Activated CD4-positive, alpha-beta T cell treated with anti-CD3 and anti-CD28 coated beads for 36 hours (primary cell): ENCODE measurements at regions of chr17 and their contacts with region 1.

Region 1: DNA sequence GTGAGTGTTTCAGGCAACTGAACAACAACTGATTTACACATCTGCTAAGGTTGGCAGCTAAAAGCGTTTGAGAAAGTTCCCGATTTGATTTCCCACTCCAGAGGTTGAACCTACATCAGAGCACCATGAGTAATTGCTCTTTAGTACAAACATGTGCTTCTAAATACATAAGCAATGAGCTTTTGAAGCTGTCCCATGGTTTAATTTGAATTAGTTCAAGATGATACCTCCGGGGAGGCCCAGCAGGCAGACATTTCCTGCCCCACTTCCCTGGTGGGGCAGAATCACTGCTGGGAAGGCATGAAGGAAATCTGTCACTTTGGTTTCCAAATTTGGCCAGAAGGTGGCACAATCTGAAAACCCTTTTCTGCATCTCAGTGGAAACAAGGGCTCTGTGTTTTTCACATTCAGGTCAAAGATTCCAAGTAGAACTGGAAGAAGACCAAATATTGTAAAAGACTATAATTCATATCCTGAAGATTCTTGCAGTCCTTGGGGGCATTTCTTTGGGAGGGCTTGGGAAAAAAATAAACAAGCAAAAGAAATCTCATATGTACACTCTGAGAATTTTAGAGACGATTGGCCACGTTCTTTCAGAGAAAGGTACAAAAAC is 176.2 kb upstream of the FAM20A start:
- DNase-seq: peak; percentile 30
- ATAC-seq: no peak
- H3K4me3 Mint-ChIP-seq: no peak overlapping the region
- H3K27ac Mint-ChIP-seq: no peak overlapping the region
- H3K4me1 Mint-ChIP-seq: no peaks in the 10 kb centered on the region
- H3K27me3 Mint-ChIP-seq: peaks cover 6% of the 10 kb centered on the region

Region 2: DNA sequence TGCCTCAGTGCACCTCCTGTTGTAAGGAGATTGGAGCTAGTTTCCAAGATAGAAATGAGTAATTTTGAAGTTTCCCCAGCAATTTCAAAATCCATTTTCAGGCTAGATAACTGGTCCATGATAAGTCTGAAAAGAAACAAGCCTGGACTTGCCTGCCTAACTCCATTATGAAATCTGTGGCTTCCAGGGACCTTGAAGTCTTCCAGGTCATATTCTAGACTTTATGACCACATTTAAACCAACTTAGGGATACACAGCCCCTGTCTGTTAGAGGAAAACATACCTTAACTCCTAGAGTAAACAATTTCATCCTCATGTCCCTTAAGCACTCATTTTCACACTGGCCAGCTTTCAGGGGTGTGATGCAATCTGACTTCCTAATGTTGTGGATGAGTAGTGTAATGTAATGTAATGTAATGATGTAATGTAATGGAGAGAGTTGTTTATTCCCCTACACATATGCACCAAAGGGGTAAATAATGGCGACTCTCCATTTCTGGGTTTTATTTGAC is 79.4 kb before region 1 on chr17:
- CTCF ChIA-PET with region 1: no interaction called
- POLR2A ChIA-PET with region 1: no interaction called
- intact Hi-C with region 1: no loop called
- DNase-seq: no peak
- ATAC-seq: no peak
- H3K4me3 Mint-ChIP-seq: no peak overlapping the region
- H3K27ac Mint-ChIP-seq: no peak overlapping the region
- H3K4me1 Mint-ChIP-seq: no peaks in the 10 kb centered on the region
- H3K27me3 Mint-ChIP-seq: peaks cover 13% of the 10 kb centered on the region

Region 3: GRCh38 chr17:68972119-68972704 is 194.9 kb after region 1 on chr17:
- CTCF ChIA-PET with region 1: no interaction called
- POLR2A ChIA-PET with region 1: no interaction called
- intact Hi-C with region 1: loop called (anchors 1 to 5 kb)
- DNase-seq: no peak
- ATAC-seq: no peak
- H3K4me3 Mint-ChIP-seq: no peak overlapping the region
- H3K27ac Mint-ChIP-seq: no peak overlapping the region
- H3K4me1 Mint-ChIP-seq: no peaks in the 10 kb centered on the region
- H3K27me3 Mint-ChIP-seq: no peaks in the 10 kb centered on the region

Region 4: DNA sequence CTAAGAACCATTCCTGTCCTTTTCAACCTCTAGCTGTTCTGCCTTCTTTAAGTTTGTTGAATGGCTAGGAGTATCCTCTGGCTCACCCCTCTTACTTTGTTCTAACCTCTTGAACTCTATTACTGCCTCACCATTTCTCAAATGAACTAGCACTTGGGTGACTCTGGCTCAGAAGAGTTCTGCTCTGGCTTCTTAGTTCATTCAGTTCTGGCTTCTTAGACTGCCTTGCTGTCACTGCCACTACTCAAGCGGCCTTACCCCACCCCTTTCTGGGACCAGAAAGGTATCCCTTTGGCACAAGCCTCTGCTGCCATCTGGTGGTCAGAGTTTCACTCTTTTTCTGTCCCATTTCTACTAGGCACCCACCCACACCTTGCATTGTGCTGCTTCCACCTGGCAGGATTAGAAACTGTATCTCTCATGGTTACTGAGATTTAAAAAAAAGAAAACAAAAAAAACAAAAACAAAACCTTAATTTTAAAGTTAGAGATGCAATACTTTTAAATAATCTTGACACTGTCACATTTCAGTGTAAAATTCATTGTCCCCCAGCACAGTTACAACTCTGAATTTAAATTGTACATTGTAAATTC is 458.1 kb after region 1 on chr17:
- CTCF ChIA-PET with region 1: interaction called, 15 read pairs
- POLR2A ChIA-PET with region 1: no interaction called
- intact Hi-C with region 1: loop called (anchors 1 kb)
- DNase-seq: peak; percentile 83
- ATAC-seq: peak; percentile 80
- H3K4me3 Mint-ChIP-seq: no peak overlapping the region
- H3K27ac Mint-ChIP-seq: no peak overlapping the region
- H3K4me1 Mint-ChIP-seq: no peaks in the 10 kb centered on the region
- H3K27me3 Mint-ChIP-seq: no peaks in the 10 kb centered on the region

Region 5: DNA sequence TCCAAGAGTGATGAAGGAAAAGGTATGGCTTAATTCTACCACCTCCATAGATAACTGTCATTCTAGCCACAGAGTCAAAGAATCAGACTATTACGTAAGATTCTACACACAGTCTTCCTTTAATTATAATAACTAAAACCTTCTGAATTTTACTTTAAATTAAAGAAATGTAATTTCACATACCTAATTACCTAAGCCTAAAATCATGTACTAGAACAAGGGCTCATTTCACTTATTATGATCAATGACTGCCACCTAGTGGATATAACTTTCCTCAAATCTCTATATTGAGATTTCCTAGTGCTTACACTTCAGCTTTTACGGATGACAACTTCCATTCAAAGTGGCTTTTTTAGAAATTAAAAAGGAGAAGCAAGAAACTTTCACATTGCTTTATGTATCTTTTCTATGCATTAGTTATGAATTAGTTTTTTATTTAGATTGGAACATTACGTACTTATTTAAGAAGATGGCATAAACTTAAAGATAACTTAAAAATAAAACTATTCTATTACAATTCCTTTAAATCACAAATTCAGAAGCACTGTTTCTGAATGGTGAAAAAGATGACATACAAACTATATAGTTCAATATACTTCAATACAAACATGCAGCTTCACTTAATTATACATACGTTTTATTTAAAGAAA is 469.5 kb after region 1 on chr17:
- CTCF ChIA-PET with region 1: interaction called, 26 read pairs
- POLR2A ChIA-PET with region 1: no interaction called
- intact Hi-C with region 1: loop called (anchors 1 kb)
- DNase-seq: no peak
- ATAC-seq: no peak
- H3K4me3 Mint-ChIP-seq: no peak overlapping the region
- H3K27ac Mint-ChIP-seq: no peak overlapping the region
- H3K4me1 Mint-ChIP-seq: no peaks in the 10 kb centered on the region
- H3K27me3 Mint-ChIP-seq: no peaks in the 10 kb centered on the region